ENCODE measurements at regions of chr16 and their contacts with region 1.

Region 1: GRCh38 chr16:35788381-35788780 is 2329.0 kb downstream of the TP53TG3F start:
- DNase-seq: no peak
- ATAC-seq: no peak
- H3K4me3 Mint-ChIP-seq: no peak overlapping the region
- H3K27ac Mint-ChIP-seq: no peak overlapping the region
- H3K4me1 Mint-ChIP-seq: no peaks in the 10 kb centered on the region
- H3K27me3 Mint-ChIP-seq: no peaks in the 10 kb centered on the region

Region 2: DNA sequence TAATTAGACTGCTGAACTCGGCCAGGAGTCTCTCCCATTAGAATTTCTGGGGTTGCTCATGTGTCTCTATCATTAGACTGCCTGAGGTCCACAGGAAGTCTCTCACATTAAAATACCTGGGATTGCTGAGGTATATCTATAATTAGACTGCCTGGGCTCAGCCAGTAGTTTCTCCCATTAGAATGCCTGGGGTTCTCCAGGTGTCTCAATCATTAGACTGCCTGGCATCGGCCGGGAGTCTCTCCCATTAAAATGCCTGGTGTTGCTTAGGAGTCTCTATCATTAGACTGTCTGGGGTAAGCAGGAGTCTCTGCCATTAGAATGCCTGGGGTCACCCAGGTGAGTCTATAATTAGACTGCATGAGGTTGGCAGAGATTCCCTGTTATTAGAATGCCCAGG is 95.6 kb before region 1 on chr16:
- CTCF ChIA-PET with region 1: no interaction called
- POLR2A ChIA-PET with region 1: no interaction called
- intact Hi-C with region 1: no loop called
- DNase-seq: no peak
- ATAC-seq: no peak
- H3K4me3 Mint-ChIP-seq: no peak overlapping the region
- H3K27ac Mint-ChIP-seq: no peak overlapping the region
- H3K4me1 Mint-ChIP-seq: no peaks in the 10 kb centered on the region
- H3K27me3 Mint-ChIP-seq: no peaks in the 10 kb centered on the region

Region 3: DNA sequence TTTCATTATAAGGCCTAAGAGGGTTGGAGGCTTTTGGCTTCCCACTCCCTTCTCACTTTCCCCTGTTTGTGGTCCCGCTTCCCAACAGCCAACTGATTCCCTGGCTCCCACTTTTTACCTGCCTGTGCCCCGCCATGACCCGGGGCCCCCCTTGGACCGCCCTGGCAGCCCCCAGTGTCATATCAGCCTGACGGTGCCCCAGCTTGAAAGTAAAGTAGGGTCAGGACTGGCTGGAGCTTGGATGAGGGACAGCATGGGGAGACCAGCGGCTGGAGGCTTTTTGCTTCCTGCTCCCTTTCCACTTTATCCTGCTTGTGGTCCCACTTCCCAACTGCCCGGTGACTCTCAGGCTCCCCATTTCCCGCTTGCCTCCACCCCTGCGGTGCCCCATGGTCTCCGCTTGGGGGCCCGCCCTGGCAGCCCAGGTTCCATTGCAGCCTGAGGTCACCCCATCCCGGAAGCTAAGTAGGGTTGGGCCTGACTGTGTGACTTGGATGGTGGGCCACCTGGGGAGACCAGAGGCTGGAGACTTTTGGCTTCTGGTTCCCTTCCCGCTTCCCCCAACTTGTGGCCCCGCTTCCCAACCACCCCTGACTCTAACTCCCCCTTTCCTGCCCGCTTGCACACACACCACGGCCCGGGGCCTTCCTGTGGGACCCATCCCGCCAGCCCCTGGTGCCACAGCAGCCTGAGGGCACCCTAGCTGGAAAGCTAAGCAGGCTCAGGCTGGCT is 54.2 kb before region 1 on chr16:
- CTCF ChIA-PET with region 1: no interaction called
- POLR2A ChIA-PET with region 1: no interaction called
- intact Hi-C with region 1: loop called in 1 of 2 experiments (anchors 10 kb)
- DNase-seq: no peak
- ATAC-seq: no peak
- H3K4me3 Mint-ChIP-seq: no peak overlapping the region
- H3K27ac Mint-ChIP-seq: no peak overlapping the region
- H3K4me1 Mint-ChIP-seq: no peaks in the 10 kb centered on the region
- H3K27me3 Mint-ChIP-seq: no peaks in the 10 kb centered on the region

Region 4: GRCh38 chr16:35823342-35823741 is 35.0 kb after region 1 on chr16:
- CTCF ChIA-PET with region 1: no interaction called
- POLR2A ChIA-PET with region 1: no interaction called
- intact Hi-C with region 1: no loop called
- DNase-seq: no peak
- ATAC-seq: no peak
- H3K4me3 Mint-ChIP-seq: no peak overlapping the region
- H3K27ac Mint-ChIP-seq: no peak overlapping the region
- H3K4me1 Mint-ChIP-seq: no peaks in the 10 kb centered on the region
- H3K27me3 Mint-ChIP-seq: no peaks in the 10 kb centered on the region

Measured in activated CD4-positive, alpha-beta T cell treated with anti-CD3 and anti-CD28 coated beads for 36 hours (primary cell).